ENCODE measurements at regions of chr10 and their contacts with region 1.

Region 1: DNA sequence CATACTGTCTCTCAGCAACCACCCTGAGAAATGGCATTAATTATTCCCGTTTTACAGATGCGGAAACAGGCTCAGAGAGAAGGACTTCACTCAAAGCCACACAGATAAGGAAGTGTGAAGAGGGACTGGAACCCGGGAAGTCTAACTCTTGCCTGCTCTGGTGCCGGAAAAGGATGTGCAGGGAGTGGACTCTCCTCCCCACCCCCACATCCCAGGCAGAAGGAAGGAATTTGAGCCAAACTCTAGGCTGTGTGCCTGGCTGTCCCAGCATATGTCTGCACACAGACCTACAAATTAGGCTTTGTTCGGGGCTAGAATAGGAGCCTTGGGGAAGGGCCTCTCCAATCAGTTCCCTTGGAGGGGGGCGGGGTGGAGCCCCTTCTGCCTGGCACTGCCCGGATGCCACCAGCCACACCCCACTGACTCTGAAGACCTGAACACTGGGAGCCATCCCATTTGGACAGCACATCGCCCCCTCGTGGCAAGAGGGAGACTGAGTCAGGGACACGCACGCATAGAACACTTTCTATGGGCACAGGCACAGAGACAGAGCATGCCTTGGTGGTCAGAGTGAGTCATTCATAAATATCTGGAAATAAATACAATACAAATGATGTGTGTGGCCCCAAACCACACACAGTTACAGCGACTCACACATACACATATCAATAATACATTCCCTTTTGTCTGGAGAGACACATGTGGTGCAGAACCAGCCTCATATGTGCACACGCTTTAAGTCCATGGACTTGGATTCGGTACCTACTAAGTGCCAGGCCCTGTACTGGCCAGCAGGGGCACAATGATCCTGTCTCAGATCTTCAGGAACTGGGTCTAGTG is 13.1 kb downstream of the LZTS2 start:
- DNase-seq: peak; percentile 89
- ATAC-seq: peak; percentile 90
- H3K4me3 Mint-ChIP-seq: no peak overlapping the region
- H3K27ac Mint-ChIP-seq: peak overlapping the region; percentile 27
- H3K4me1 Mint-ChIP-seq: peaks cover 27% of the 10 kb centered on the region
- H3K27me3 Mint-ChIP-seq: peaks cover 17% of the 10 kb centered on the region

Region 2: DNA sequence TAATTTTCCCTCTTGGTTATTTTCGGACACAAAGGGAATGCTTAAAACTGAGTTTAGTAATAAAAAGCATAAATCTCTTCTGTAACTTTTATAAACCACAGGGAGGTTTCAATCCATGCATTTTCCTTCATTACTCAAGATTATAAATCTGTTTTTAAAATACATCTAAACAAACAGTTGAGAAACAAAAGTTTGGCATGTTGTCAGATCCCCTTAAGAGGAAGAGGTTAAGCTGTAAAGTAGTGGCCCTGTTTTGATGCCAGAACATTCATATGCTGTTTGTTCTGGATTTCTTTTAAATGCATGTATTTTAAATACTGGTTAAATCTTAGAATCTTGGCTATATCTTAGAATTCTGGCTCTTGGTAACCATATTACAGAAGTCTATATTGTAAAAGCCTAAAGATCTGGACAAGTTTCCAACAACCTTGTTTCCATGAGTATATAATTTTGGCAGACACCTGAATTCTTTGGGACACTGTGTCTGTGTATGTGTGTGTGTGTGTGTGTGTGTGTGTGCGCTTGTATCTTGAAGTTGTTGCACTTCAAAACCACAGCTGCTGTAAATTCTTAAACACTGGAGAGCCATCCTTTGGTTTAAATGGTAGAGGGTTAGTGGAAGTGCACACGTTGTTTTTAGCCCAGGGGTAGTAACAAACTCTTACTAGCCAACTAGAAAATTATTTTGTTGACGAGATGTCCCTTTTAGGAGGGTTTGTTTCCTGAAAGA is 50.2 kb before region 1 on chr10:
- CTCF ChIA-PET with region 1: interaction called, 20 read pairs
- DNase-seq: no peak
- ATAC-seq: no peak
- H3K4me3 Mint-ChIP-seq: no peak overlapping the region
- H3K27ac Mint-ChIP-seq: no peak overlapping the region
- H3K4me1 Mint-ChIP-seq: no peaks in the 10 kb centered on the region
- H3K27me3 Mint-ChIP-seq: no peaks in the 10 kb centered on the region

Region 3: DNA sequence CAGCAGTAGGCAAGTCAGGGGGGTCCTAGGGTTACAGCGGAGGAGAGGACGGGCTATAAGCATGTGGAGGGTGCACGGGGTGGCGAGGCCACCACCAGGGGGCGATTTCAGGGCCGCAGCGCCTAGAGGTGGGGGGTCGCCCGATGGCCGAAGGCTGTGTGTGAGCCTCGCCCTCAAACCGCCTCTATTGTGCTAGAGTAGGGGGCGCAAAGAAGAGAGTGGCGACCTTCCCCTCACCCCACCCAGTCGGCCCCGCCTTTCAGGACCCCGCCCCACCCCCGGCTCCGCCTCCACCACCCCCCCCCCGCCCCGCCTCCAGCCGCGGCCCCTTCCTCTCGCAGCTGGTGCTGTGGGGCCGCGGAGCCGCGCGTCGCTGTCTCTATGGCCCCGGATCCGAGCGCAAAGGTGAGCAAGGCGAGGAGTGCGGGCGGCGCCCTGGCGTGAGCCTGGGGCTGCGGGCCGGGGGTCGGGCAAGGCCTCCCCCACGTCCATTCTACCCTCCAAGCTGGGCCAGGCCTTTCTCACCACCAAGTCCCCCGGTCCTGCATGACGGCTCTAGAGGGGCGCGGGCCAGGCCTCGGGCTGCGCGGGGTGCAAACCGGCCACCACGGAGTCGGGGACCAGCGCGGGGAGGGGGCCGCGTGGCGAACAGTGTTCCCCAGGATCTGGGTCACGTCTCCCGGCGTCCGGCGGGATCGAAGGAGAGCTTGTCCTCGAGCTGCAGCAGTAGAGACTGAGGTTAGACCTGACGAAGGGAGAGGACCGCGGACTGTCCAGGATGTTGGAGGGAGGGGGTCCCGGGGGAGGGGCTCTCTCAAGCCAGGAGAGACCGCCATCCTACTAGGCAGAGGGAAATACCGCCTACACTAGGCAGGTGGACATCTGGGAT is 43.3 kb before region 1 on chr10 and contains the start of gene SEMA4G:
- CTCF ChIA-PET with region 1: interaction called, 20 read pairs
- DNase-seq: no peak
- ATAC-seq: peak; percentile 80
- H3K4me3 Mint-ChIP-seq: peak within 1 kb of the TSS; percentile 27
- H3K27ac Mint-ChIP-seq: peak within 1 kb of the TSS; percentile 35
- H3K4me1 Mint-ChIP-seq: peaks cover 7% of the 10 kb centered on the region
- H3K27me3 Mint-ChIP-seq: no peaks in the 10 kb centered on the region
- total RNA-seq, gene SEMA4G: 0.26 to 0.45 TPM

Region 4: GRCh38 chr10:100986952-100987750 is 25.6 kb before region 1 on chr10 and contains the starts of genes MRPL43 and TWNK:
- CTCF ChIA-PET with region 1: interaction called, 12 read pairs
- DNase-seq: peak; percentile 90
- ATAC-seq: peak; percentile 97
- H3K4me3 Mint-ChIP-seq: peak within 1 kb of the TSS; percentile 91
- H3K27ac Mint-ChIP-seq: peak within 1 kb of the TSS; percentile 85
- H3K4me1 Mint-ChIP-seq: peaks cover 37% of the 10 kb centered on the region
- H3K27me3 Mint-ChIP-seq: no peaks in the 10 kb centered on the region
- total RNA-seq, gene MRPL43: 48.2 to 52.2 TPM
- total RNA-seq, gene TWNK: 11.2 to 18.7 TPM

Region 5: DNA sequence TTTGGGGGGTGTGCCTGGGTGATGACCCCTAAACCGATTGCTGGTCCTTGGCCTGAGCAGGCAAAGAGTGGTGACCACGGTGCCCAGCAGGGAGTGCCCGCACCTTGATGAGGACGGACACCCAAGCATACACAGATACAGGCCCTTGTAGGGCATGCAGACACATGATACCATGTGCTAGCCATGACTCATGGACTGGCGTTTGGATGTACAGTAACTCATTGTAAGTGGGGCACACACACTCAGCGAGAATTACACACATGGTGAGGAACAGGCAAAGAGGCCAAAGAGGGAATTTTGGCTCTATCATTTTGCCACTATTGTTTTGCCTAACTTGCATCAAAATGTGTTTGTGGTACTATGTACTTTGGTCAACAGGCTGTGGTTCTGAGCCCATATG is 73.1 kb after region 1 on chr10:
- CTCF ChIA-PET with region 1: no interaction called
- DNase-seq: no peak
- ATAC-seq: no peak
- H3K4me3 Mint-ChIP-seq: no peak overlapping the region
- H3K27ac Mint-ChIP-seq: no peak overlapping the region
- H3K4me1 Mint-ChIP-seq: no peaks in the 10 kb centered on the region
- H3K27me3 Mint-ChIP-seq: peaks cover 71% of the 10 kb centered on the region

Region 6: GRCh38 chr10:101103430-101103829 is 90.7 kb after region 1 on chr10:
- CTCF ChIA-PET with region 1: no interaction called
- DNase-seq: no peak
- ATAC-seq: no peak
- H3K4me3 Mint-ChIP-seq: no peak overlapping the region
- H3K27ac Mint-ChIP-seq: no peak overlapping the region
- H3K4me1 Mint-ChIP-seq: no peaks in the 10 kb centered on the region
- H3K27me3 Mint-ChIP-seq: peaks cover 39% of the 10 kb centered on the region

Region 7: GRCh38 chr10:101354328-101355051 is 341.7 kb after region 1 on chr10:
- CTCF ChIA-PET with region 1: no interaction called
- DNase-seq: peak; percentile 64
- ATAC-seq: peak; percentile 16
- H3K4me3 Mint-ChIP-seq: peak overlapping the region; percentile 86
- H3K27ac Mint-ChIP-seq: peak overlapping the region; percentile 93
- H3K4me1 Mint-ChIP-seq: peaks cover 25% of the 10 kb centered on the region
- H3K27me3 Mint-ChIP-seq: peaks cover 13% of the 10 kb centered on the region